AG04450 (cell line): ENCODE measurements at regions of chr9 and their contacts with region 1.

Region 1: DNA sequence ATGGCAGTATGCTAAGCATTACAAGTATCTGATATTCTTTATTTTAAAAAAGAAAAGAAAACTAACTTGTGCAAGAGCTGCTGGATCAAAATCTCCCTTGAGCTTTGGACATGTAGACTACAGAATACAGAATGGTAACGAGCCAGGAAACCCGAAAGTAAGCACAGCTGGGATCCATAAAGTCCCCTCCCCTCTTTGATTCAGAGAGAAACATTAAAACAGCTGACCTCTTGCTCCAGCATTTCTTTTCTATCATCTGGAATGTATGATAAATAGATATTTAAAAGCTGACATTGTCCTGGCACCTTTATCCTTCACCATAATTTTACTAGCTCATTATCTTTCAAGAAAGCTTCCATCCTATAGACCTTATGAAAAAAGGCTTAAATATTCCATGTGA is 28.2 kb upstream of the LPAR1 start:
- DNase-seq: no peak
- H3K4me3 ChIP-seq: no peak overlapping the region
- H3K27ac ChIP-seq: no peak overlapping the region
- H3K27me3 ChIP-seq: no peaks in the 10 kb centered on the region
- CTCF ChIP-seq: no peak

Region 2: DNA sequence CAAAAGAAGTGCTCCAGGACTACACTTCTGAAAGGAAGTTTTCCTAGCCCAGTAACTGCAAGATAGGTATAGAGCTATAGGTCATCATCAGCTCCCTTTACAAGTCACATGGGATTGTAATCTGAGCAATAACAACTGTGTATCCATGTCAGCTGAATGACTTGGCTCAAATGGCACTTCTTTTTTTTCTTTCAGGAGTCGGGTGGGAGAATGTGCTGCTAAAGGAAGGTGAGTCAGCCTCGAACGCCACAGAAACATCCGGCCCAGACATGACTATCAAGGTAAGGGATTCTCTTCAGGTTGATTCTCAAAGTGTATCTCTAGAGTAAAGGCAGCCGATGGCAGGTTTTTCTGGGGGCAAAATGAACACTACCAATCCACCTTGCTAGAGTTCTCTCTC is 1050.7 kb before region 1 on chr9:
- CTCF ChIA-PET with region 1: no interaction called
- POLR2A ChIA-PET with region 1: no interaction called
- DNase-seq: peak; percentile 38
- H3K4me3 ChIP-seq: no peak overlapping the region
- H3K27ac ChIP-seq: peak overlapping the region; percentile 83
- H3K27me3 ChIP-seq: no peaks in the 10 kb centered on the region
- CTCF ChIP-seq: no peak

Region 3: DNA sequence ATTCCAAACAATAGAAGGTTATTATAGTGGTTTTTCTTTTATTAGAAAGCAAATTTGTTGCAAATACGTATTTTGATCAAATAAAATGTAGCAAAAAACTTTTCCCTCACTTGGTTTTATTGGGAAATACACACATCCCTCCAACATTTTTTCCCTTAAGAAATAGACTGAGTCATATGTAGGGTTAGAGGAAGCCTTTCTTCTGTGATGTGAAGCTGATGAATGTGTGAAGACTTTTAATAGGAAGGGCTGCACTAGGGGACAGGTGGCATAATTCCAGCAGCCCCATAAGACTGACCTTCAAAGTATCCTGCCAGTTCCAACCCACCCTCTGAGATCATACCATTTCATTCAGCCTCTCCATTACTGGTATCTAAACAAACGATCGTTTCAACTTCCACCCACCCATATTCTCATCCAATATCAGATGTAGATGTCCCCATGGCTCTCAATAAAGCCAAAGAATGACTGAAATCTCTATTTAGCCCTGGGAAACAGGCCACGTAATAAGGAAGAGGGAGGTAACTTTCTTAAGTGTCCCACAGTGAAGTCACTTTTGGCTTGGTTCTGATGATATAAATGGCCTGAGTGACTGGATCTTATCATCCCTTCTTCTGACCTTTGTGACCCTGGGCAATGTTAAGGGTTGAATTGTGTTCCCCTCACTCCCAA is 36.5 kb after region 1 on chr9:
- CTCF ChIA-PET with region 1: interaction called, 12 read pairs
- POLR2A ChIA-PET with region 1: no interaction called
- DNase-seq: no peak
- H3K4me3 ChIP-seq: no peak overlapping the region
- H3K27ac ChIP-seq: no peak overlapping the region
- H3K27me3 ChIP-seq: no peaks in the 10 kb centered on the region
- CTCF ChIP-seq: no peak

Region 4: DNA sequence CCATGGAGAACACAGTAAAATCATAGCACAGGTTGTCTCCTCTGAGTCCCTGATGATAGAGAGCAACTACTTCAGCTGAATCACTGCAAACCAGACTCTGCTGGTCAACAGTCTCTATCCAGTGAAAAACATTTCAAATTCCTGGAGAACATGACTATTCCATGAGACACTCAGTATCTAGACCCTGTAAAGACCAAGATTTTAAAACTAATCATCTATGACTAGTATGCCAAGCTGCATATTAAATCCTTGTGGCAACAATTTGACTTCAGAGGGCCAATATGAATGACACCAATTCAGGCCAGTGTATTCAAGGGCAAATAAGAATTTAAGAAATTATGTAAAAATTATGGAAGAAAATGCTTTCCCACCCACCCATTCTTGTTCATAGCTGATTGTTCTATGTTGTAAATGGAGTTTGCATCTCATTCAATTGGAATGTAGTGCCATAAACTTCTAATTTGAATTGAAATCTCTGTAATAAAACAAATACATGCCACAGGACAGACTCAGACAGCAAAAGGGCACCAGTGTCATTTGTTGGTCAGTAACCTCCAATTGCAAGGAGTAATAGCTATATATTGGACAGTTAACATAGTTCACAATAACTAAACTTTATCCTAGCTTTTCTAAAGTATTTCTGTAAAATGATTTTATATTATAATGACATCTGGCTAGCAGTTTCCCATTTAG is 51.9 kb after region 1 on chr9:
- CTCF ChIA-PET with region 1: no interaction called
- POLR2A ChIA-PET with region 1: no interaction called
- DNase-seq: peak; percentile 39
- H3K4me3 ChIP-seq: no peak overlapping the region
- H3K27ac ChIP-seq: peak overlapping the region; percentile 55
- H3K27me3 ChIP-seq: no peaks in the 10 kb centered on the region
- CTCF ChIP-seq: no peak